Activated naive CD4-positive, alpha-beta T cell treated with anti-CD3 and anti-CD28 coated beads for 36 hours (primary cell): ENCODE measurements at regions of chr5 and their contacts with region 1.

Region 1: DNA sequence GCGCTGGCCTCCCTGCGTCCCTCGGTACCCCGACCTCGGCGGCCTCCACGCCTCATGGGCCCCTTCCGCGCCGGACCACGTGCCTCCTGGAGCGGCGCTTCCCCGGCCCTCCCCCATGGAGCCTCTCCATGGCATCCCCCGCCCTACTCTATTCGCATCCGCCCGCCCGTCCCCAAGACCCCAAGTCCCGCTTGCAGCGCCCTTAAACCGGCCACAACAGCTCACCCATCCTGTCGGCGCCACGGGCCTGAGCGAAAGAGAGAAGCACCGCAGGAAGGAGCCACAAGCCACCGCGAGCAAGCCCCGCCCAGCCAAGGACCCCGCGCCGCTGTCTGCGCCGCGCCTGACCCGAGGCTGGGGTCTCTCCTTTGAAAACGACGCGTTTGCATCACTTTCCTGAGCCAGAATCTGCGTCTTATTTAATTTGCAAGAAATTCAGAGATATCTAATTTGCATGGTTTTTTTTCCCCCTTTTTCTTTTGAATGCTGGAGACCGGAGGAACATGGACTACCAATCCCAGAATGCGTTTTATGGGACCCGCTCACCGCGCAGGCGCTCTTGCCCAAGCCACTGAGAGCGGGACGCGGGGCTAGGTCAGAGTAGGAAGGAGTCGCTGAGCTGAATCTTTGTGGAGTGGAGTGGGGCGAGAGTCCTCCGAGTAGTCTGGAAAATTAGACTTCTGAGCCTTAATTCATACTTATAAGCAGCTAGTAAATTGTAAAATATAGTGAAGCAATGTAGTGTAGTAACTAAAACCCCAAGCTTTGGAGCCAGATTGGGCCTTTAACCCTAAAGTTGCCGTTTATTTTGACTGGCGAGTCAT is at the start of gene RPS23:
- DNase-seq: peak; percentile 93
- H3K4me3 Mint-ChIP-seq: peak within 1 kb of the TSS; percentile 95
- H3K27ac Mint-ChIP-seq: peak within 1 kb of the TSS; percentile 99
- H3K4me1 Mint-ChIP-seq: peaks cover 38% of the 10 kb centered on the region
- H3K27me3 Mint-ChIP-seq: no peaks in the 10 kb centered on the region
- total RNA-seq, gene RPS23: 3,081 to 3,109 TPM

Region 2: DNA sequence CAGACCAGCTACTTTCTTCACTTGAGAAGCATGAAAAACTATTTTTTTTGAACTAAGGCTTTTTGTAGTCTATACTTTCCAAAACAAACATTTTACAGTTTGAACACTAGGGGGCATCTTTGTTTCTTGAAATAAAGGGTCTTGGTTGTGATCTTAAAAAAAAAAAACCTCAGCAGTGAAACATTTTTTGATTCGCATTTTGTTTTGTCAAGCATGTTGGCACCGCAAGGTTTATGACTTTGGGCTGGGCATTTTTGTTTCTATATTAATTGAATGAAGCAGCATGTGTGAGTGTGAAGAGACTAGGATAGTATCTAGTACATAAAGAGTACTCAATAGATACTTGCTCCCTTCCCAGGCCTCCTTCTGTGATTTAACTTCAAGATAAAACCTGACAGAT is 852.7 kb before region 1 on chr5:
- CTCF ChIA-PET with region 1: no interaction called
- intact Hi-C with region 1: loop called (anchors 5 kb)
- DNase-seq: peak; percentile 7
- H3K4me3 Mint-ChIP-seq: no peak overlapping the region
- H3K27ac Mint-ChIP-seq: peak overlapping the region; percentile 8
- H3K4me1 Mint-ChIP-seq: peaks cover 16% of the 10 kb centered on the region
- H3K27me3 Mint-ChIP-seq: no peaks in the 10 kb centered on the region

Region 3: GRCh38 chr5:81533629-81534405 is 744.5 kb before region 1 on chr5:
- CTCF ChIA-PET with region 1: no interaction called
- intact Hi-C with region 1: loop called (anchors 5 kb)
- DNase-seq: no peak
- H3K4me3 Mint-ChIP-seq: no peak overlapping the region
- H3K27ac Mint-ChIP-seq: no peak overlapping the region
- H3K4me1 Mint-ChIP-seq: peaks cover 46% of the 10 kb centered on the region
- H3K27me3 Mint-ChIP-seq: no peaks in the 10 kb centered on the region

Region 4: GRCh38 chr5:82356808-82357671 is 78.7 kb after region 1 on chr5:
- CTCF ChIA-PET with region 1: no interaction called
- intact Hi-C with region 1: loop called (anchors 1 kb)
- DNase-seq: peak; percentile 91
- H3K4me3 Mint-ChIP-seq: peak overlapping the region; percentile 54
- H3K27ac Mint-ChIP-seq: peak overlapping the region; percentile 97
- H3K4me1 Mint-ChIP-seq: peaks cover 50% of the 10 kb centered on the region
- H3K27me3 Mint-ChIP-seq: no peaks in the 10 kb centered on the region

Region 5: DNA sequence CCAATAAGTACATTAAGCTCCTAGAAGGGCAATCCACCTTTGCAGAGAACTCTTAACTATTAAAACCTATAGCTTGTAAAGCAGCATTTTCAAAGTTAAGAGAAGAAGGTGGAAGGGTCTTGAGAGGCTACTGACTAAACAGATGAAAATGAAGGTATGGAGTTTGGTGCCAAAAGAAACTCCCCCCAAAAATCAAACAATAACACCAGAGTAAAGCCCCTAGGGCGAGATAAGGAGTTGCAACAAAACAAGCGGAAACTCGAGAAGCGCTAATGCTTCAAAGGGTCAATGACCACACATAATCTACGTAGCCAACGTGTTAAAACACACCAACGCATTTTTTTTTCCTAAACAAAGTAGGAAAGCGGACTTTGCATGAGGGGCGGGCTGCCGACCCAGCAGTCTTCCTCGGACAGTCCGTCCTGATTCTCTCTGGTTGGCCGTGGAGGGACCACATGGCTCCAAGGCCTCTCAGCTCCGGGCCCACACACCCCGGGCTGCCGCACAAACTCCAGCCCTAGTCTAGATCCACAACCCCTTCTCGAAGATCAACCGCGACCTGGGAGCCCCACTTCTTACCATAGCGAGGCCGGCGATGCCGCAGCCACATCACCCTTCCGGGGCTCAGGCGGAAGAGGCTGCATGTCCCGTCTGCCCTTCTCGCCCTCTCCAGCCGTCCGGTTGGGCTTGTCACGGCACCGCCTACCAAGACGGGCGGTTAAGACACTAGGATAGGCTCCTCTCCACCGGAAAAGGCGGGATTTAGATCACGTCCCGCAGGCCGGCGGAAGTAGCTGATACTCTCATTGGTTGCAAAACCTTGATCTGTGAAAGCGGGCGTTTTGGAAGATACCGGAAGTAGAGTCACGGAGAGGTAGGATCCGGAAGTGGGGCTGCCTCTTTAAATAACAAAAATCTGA is 798.7 kb after region 1 on chr5 and contains the starts of genes TMEM167A and XRCC4:
- CTCF ChIA-PET with region 1: no interaction called
- intact Hi-C with region 1: loop called (anchors 2 kb)
- DNase-seq: peak; percentile 95
- H3K4me3 Mint-ChIP-seq: peak within 1 kb of the TSS; percentile 98
- H3K27ac Mint-ChIP-seq: peak within 1 kb of the TSS; percentile 96
- H3K4me1 Mint-ChIP-seq: peaks cover 48% of the 10 kb centered on the region
- H3K27me3 Mint-ChIP-seq: no peaks in the 10 kb centered on the region
- total RNA-seq, gene TMEM167A: 58.8 to 64.4 TPM
- total RNA-seq, gene XRCC4: 12.1 to 12.8 TPM